HepG2 (cell line): ENCODE measurements at regions of chr19 and their contacts with region 1.

Region 1: DNA sequence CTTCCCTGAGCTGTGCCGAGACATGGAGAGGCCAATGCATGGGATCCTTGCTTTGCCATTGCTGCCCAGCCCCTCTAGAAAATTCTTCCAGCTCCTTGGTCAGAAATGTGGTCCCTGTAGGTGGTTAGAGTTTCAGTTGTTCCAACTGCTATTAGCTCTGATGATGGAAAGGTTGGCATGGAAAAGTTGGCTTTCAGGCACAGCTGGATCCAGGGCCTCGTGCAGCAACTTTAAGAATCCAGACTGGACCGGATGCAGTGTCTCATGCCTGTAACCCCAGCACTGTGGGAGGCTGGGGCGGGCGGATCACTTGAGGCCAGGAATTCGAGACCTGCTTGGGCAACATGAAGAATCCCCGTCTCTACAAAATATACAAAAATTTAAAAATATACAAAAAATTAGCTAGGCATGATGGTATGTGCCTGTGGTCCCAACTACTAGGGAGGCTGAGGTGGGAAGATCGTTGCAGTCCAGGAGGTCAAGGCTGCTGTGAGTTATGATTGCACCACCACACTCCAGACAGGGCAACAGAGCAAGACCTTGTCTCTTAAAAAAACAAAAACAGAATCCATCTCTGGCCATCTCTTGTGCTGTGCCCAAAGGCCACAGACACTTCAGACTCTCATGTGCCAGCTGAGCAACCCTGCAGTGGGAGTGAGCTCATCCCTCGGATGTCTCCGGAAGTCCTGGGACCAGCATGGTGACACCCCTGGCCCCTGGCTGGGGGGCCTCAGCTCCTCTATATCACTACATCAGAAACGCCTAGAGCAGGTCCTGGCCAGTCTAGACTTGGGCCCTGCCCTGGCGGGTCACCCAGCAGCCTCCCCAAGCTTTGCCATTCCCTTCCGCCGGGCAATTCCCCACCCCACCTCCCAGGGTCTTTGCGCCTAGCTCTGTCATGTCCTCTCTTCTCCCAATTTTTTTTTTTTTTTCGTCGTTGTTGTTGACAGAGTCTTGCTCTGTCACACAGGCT is 16.8 kb downstream of the MEX3D start:
- DNase-seq: no peak
- ATAC-seq: peak; percentile 20; the same call in 2 of the 3 replicates
- H3K4me3 ChIP-seq: no peak overlapping the region
- H3K27ac ChIP-seq: no peak overlapping the region
- H3K4me1 ChIP-seq: peaks cover 21% of the 10 kb centered on the region
- H3K27me3 ChIP-seq: no peaks in the 10 kb centered on the region
- CTCF ChIP-seq: no peak
- EP300 ChIP-seq: no peak
- POLR2A ChIP-seq: no peak
- RAD21 ChIP-seq: no peak

Region 2: DNA sequence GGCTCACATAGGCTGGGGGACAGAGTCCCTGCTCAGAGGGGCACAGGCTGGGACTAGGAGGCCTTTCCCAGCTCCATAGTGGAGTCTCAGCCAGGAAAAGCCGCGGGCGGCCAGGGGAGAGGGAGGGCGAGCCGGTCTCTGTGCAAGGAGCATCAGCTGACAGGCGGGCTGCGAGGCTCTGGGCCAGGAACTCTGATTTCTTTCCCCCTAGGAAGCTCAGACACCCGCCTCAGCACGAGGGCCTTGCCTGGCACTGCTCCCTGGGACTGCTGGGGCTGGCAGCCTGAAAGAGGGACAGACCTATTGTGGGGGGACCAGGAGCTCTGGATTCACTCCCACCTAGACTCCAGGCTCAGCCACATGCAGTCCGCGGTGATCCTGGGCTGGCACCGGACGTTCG is 29.7 kb before region 1 on chr19:
- CTCF ChIA-PET with region 1: no interaction called
- POLR2A ChIA-PET with region 1: no interaction called
- in situ Hi-C with region 1: no loop called
- intact Hi-C with region 1: no loop called
- DNase-seq: no peak
- ATAC-seq: peak; percentile 23
- H3K4me3 ChIP-seq: no peak overlapping the region
- H3K27ac ChIP-seq: no peak overlapping the region
- H3K4me1 ChIP-seq: peaks cover 20% of the 10 kb centered on the region
- H3K27me3 ChIP-seq: peaks cover 26 to 62% of the 10 kb centered on the region in 2 experiments
- CTCF ChIP-seq: no peak
- EP300 ChIP-seq: no peak
- POLR2A ChIP-seq: no peak
- RAD21 ChIP-seq: no peak

Region 3: DNA sequence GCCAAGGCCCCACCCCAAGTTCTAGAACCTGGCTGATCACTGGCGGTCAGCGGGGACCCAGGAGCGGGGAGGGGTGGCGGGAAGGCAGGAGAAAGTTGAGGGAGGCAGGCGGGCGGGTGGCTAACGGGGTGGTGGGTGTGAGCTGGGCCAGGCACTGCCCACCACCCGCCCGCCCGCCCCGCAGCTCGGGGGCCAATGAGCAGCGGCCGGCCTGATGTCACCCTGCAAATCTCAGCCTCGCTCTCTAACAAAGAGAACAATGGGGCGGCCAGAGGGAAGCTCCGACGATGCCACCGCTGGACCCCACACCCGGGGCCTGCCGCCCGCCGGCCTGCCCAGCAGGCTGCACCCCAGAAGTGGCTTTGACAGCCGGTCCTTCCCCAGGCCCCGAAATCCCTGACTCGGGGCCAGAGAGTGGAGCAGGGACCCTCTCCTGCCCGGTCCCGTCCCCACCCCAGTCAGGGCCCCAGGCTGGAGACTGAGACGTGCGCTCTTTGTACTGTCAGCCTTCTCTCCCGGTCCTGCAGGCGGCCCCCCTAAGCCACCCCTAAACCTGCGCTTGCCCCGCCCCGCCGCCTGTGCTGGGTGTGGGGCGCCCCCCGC is 15.3 kb after region 1 on chr19:
- CTCF ChIA-PET with region 1: no interaction called
- POLR2A ChIA-PET with region 1: no interaction called
- in situ Hi-C with region 1: no loop called
- intact Hi-C with region 1: loop called (anchors 2 kb)
- DNase-seq: peak; percentile 40
- ATAC-seq: peak; percentile 45
- H3K4me3 ChIP-seq: peak overlapping the region; percentile 72 to 81 (median 75); a peak in 4 of 6 replicates
- H3K27ac ChIP-seq: no peak overlapping the region
- H3K4me1 ChIP-seq: peaks cover 13% of the 10 kb centered on the region
- H3K27me3 ChIP-seq: peaks cover 0 to 8% of the 10 kb centered on the region in 2 experiments; a peak in 2 of 5 replicates
- CTCF ChIP-seq: no peak
- EP300 ChIP-seq: no peak
- POLR2A ChIP-seq: 0 out of 4 replicates have a peak, but pooled peaks of 1 of the 2 experiments have one; percentile 22
- RAD21 ChIP-seq: no peak